Naive thymus-derived CD4-positive, alpha-beta T cell (primary cell): ENCODE measurements at regions of chr4 and their contacts with region 1.

Region 1: GRCh38 chr4:101020956-101021355 is 326.4 kb downstream of the PPP3CA start:
- DNase-seq: peak in 3 of 9 donors; percentile 3 to 10 (median 10)
- ATAC-seq: peak; percentile 82
- H3K4me3 ChIP-seq: peak overlapping the region; percentile 21
- H3K4me3 Mint-ChIP-seq: peak overlapping the region in 4 of 10 donors; percentile 3 to 76 (median 46)
- H3K27ac ChIP-seq: no peak overlapping the region
- H3K27ac Mint-ChIP-seq: peak overlapping the region; percentile 8 to 90 (median 59)
- H3K4me1 ChIP-seq: peaks cover 0 to 48% of the 10 kb centered on the region in 2 donors
- H3K4me1 Mint-ChIP-seq: peaks cover 21 to 55% (median 34%) of the 10 kb centered on the region in 7 donors
- H3K27me3 ChIP-seq: no peaks in the 10 kb centered on the region
- H3K27me3 Mint-ChIP-seq: no peaks in the 10 kb centered on the region

Region 2: GRCh38 chr4:100895556-100896197 is 125.3 kb before region 1 on chr4:
- CTCF ChIA-PET with region 1: no interaction called
- POLR2A ChIA-PET with region 1: no interaction called
- intact Hi-C with region 1: loop called in 1 of 2 experiments (anchors 2 kb)
- DNase-seq: peak in 5 of 9 donors; percentile 9 to 24 (median 22)
- ATAC-seq: peak; percentile 60
- H3K4me3 ChIP-seq: peak overlapping the region; percentile 49
- H3K4me3 Mint-ChIP-seq: peak overlapping the region; percentile 76 to 91 (median 83)
- H3K27ac ChIP-seq: peak overlapping the region; percentile 27
- H3K27ac Mint-ChIP-seq: peak overlapping the region; percentile 43 to 91 (median 80)
- H3K4me1 ChIP-seq: peaks cover 0 to 6% of the 10 kb centered on the region in 2 donors
- H3K4me1 Mint-ChIP-seq: peaks cover 5 to 18% (median 18%) of the 10 kb centered on the region in 7 donors
- H3K27me3 ChIP-seq: no peaks in the 10 kb centered on the region
- H3K27me3 Mint-ChIP-seq: peaks cover 0 to 8% (median 0%) of the 10 kb centered on the region in 5 donors

Region 3: DNA sequence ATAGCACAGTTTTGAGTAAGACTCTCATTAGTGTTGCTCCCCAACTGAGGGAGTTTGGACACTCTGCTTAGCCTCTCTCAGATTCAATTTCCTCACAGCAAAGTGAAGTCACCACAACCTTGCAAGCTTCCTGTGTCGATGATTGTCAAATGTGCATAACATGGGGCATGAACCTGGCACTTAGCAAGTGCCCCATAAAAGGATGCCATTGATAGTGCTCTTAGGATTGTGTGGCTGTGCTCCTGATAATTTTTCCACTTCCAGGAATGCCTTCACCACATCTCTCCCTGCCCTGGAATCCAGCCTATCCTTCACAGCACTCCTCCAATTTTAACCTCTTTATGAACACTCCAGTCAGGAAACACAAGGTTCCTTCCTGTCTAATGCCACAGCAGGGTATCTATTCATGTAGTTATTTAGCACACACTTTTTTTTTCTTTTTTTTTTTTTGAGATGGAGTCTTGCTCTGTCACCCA is 17.0 kb after region 1 on chr4:
- CTCF ChIA-PET with region 1: no interaction called
- POLR2A ChIA-PET with region 1: no interaction called
- intact Hi-C with region 1: loop called (anchors 2 kb)
- DNase-seq: no peak
- ATAC-seq: peak; percentile 74
- H3K4me3 ChIP-seq: no peak overlapping the region
- H3K4me3 Mint-ChIP-seq: peak overlapping the region in 3 of 10 donors; percentile 43 to 68 (median 45)
- H3K27ac ChIP-seq: no peak overlapping the region
- H3K27ac Mint-ChIP-seq: peak overlapping the region in 1 of 9 donors; percentile 68
- H3K4me1 ChIP-seq: peaks cover 0 to 32% of the 10 kb centered on the region in 2 donors
- H3K4me1 Mint-ChIP-seq: peaks cover 0 to 29% (median 11%) of the 10 kb centered on the region in 7 donors
- H3K27me3 ChIP-seq: no peaks in the 10 kb centered on the region
- H3K27me3 Mint-ChIP-seq: no peaks in the 10 kb centered on the region

Region 4: GRCh38 chr4:101205916-101206315 is 185.0 kb after region 1 on chr4:
- CTCF ChIA-PET with region 1: no interaction called
- POLR2A ChIA-PET with region 1: interaction called, 3 read pairs
- intact Hi-C with region 1: loop called in 1 of 2 experiments (anchors 2 kb)
- DNase-seq: peak in 7 of 9 donors; percentile 10 to 44 (median 18)
- ATAC-seq: peak; percentile 96
- H3K4me3 ChIP-seq: no peak overlapping the region
- H3K4me3 Mint-ChIP-seq: peak overlapping the region in 9 of 10 donors; percentile 3 to 76 (median 55)
- H3K27ac ChIP-seq: no peak overlapping the region
- H3K27ac Mint-ChIP-seq: peak overlapping the region in 4 of 9 donors; percentile 13 to 83 (median 46)
- H3K4me1 ChIP-seq: peaks cover 12 to 17% of the 10 kb centered on the region in 2 donors
- H3K4me1 Mint-ChIP-seq: peaks cover 25 to 52% (median 34%) of the 10 kb centered on the region in 7 donors
- H3K27me3 ChIP-seq: no peaks in the 10 kb centered on the region
- H3K27me3 Mint-ChIP-seq: peaks cover 0 to 3% (median 0%) of the 10 kb centered on the region in 5 donors

Region 5: GRCh38 chr4:101419324-101420135 is 398.6 kb after region 1 on chr4:
- CTCF ChIA-PET with region 1: no interaction called
- POLR2A ChIA-PET with region 1: no interaction called
- intact Hi-C with region 1: loop called in 1 of 2 experiments (anchors 2 kb)
- DNase-seq: peak in 5 of 9 donors; percentile 7 to 26 (median 24)
- ATAC-seq: no peak
- H3K4me3 ChIP-seq: no peak overlapping the region
- H3K4me3 Mint-ChIP-seq: peak overlapping the region in 6 of 10 donors; percentile 1 to 70 (median 12)
- H3K27ac ChIP-seq: no peak overlapping the region
- H3K27ac Mint-ChIP-seq: peak overlapping the region in 2 of 9 donors; percentile 41 to 65
- H3K4me1 ChIP-seq: peaks cover 33 to 36% of the 10 kb centered on the region in 2 donors
- H3K4me1 Mint-ChIP-seq: peaks cover 26 to 53% (median 39%) of the 10 kb centered on the region in 7 donors
- H3K27me3 ChIP-seq: peaks cover 0 to 11% of the 10 kb centered on the region in 2 donors
- H3K27me3 Mint-ChIP-seq: peaks cover 32 to 62% (median 41%) of the 10 kb centered on the region in 5 donors